ENCODE measurements at regions of chr11 and their contacts with region 1.

Region 1: DNA sequence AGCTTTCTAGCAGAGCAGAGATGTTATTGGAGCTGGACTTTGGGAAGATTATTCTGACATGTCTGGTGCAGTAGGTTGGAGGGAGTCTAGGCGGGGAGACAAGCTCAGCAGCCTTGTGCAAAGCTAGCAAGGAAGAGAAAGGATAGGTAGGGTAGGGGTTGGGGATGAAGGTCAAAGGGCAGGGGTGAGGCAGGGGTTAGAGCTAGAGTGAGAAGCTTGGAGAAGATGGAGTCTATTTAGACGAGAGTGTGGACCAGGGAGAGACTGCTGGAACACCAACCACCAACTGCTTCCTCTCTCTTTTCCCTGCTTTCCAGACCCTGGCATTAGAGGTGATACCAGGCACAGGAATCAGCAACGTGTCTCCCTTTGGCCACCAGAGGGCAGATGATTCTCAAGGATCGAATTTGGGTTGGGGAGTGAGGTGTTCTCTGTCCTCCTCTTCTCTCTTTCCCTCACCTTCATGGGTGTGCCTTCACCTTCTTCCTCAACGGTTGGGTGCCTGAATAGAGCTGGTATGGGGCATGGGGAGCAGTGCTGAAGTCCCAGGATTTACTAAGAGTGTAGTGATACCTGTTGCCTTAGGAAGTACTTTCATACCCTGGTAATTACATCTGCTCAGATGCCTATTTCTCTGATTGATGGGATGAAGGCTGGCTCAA is 1.8 kb upstream of the MARK2 start:
- DNase-seq: peak; percentile 87
- ATAC-seq: peak; percentile 51

Region 2: GRCh38 chr11:63866211-63866610 is 29.1 kb after region 1 on chr11:
- intact Hi-C with region 1: no loop called
- DNase-seq: peak; percentile 77
- ATAC-seq: peak; percentile 43

Region 3: GRCh38 chr11:63945477-63946163 is 108.5 kb after region 1 on chr11:
- intact Hi-C with region 1: loop called (anchors 2 kb)
- DNase-seq: peak; percentile 79
- ATAC-seq: peak; percentile 94

Region 4: DNA sequence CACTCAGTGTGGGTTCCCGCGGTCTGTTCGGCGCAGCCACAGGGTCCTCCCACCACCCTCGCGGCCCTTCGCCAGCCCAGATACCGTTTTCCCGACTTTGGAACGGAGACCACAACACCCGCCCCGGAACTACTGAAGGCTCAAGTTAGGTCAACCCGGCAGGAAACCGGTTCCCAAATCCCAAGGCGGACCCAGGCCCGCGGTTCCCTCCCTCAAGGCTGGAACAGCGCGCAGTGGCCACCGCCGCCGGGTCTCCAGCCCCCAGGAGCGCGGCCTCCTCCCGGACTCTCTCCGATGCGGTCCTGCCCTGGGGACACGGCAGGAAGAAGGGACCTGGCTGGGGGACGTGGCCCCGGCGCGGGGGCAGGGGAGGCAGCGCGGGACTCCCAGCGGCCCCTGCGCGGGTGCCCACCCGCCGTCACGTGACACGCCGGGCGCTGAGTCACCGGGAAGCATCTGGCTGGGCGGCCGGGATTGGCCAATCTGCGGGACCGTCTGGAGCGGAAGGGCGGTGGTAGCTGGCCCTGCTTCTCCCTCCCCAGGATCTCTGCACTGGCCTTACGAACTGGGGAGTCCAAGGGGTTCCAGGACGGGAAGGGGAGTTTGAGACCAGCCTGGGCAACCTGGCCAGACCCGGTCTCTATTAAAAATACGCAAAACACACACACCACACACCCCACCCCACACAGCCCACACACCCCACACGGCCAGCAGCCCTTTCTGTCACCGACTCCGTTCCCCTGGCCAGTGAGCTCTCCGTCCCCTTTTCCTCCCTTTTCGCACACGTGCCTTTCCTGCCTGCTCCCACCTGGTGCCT is 1640.2 kb after region 1 on chr11:
- intact Hi-C with region 1: no loop called
- DNase-seq: peak; percentile 98
- ATAC-seq: peak; percentile 90